ENCODE measurements at regions of chr20 and their contacts with region 1.

Region 1: DNA sequence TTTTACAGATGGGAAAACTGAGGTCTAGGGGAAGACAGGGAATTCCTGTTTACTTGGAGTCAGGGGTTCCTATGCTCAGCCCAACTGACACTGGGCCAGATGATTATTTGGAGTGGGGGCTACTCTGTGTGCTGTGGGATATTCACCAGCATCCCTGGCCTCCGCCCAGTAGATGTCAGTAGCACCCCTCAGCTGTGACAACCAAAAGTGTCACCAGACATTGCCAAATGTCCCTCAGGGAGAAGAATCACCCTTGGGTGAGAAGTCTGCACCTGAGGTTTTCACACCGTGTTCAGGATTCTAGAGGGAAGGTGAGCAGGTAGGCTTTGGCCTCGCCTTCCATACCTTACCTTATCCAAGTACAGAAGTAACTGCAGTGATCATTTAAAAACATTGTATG is 27.6 kb downstream of the CDH26 start:
- DNase-seq: peak in 1 of 2 experiments; percentile 56
- H3K4me3 ChIP-seq: no peak overlapping the region
- H3K27ac ChIP-seq: no peak overlapping the region
- H3K4me1 ChIP-seq: peaks cover 36% of the 10 kb centered on the region
- H3K27me3 ChIP-seq: no peaks in the 10 kb centered on the region
- CTCF ChIP-seq: peak; percentile 52

Region 2: DNA sequence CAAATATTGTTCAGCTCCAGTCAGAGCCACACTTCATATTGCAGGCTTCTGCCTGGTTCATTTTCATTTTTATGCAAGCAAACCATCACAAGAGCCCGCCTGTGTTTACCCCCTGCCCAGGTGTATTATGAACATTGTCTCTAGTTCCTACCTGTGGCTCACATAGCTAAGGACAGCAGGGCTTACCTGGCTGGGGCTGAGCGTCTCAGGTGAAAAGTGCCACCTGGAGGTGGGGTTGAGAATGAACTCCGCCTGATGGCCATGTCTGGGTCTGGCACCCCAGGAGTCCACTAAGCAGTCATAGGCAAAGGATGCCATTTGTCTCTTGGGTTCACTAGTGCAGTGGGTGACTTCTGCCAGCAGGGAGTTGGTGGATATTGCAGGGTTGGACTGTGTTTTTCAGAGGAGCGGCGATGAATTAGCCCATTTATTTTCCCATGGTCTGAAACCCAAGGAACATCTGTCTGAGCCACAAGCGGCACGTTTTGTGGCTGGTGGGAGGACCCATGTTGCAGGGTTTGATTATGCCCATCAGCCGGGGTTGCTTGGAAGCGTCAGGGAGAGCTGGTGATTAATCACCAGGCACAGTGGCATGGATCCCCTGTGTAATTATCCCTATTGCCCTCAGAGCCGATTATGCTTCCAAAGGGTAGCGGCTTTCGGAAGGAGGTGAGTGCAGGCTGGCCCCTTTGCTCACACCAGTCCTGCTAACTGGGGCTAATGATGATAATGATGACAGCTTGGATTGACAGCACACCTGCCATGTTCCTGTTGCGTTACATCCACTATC is 64.5 kb after region 1 on chr20:
- CTCF ChIA-PET with region 1: no interaction called
- POLR2A ChIA-PET with region 1: interaction called, 9 read pairs
- intact Hi-C with region 1: loop called (anchors 2 kb)
- DNase-seq: peak; percentile 62 to 67
- H3K4me3 ChIP-seq: no peak overlapping the region
- H3K27ac ChIP-seq: no peak overlapping the region
- H3K4me1 ChIP-seq: no peaks in the 10 kb centered on the region
- H3K27me3 ChIP-seq: no peaks in the 10 kb centered on the region
- CTCF ChIP-seq: peak; percentile 81